G401 (cell line): ENCODE measurements at regions of chr3 and their contacts with region 1.

Region 1: GRCh38 chr3:14274999-14275961 is 96.7 kb downstream of the LSM3 start:
- DNase-seq: no peak

Region 2: GRCh38 chr3:14177580-14178246 is 97.6 kb before region 1 on chr3:
- in situ Hi-C with region 1: no loop called
- DNase-seq: peak; percentile 49

Region 3: DNA sequence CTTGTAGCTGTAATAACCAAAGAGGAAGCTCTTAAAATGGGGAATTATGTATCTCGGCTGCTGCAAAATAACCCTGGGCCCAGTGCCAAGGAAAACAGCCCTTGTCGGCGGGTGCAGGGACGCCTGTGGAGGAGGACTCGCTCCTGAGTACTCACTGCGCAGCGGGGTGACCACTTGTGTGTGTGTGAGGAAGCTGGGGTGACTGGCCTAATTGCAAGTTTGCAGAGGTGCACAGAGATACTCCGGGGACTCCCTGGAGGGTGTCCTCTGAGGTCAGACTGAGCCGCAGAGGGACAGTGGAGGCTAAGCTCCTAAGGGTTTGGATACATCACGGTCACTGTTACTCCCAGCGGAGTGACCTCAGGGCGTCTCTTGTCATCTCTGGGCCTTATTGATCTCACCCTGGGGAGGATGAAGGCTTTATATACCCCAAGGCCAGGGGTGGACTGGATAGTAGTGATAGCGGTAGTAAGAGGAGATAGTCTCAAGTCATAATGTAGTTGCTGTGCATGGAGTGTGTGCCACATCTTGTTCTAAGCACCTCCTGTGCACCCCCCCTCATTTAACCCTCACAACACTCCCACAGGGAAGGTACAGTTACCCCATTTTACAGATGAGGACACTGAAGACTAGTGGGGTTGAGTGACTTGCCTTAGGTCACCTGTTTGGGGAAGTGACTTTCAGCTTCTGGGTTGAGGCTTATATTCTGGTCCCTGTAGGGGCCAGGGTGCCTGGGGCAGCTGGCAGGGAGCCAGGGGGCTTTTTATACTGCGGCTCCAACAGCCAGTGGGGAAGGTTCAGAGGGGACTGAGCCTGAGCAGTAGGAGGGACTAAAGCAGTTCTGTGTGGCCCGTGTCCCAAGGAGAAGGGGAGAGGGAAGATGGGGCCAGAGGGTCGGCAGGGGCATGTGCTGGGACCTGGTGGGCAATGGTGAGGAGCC is 164.6 kb after region 1 on chr3:
- in situ Hi-C with region 1: no loop called
- DNase-seq: no peak

Region 4: DNA sequence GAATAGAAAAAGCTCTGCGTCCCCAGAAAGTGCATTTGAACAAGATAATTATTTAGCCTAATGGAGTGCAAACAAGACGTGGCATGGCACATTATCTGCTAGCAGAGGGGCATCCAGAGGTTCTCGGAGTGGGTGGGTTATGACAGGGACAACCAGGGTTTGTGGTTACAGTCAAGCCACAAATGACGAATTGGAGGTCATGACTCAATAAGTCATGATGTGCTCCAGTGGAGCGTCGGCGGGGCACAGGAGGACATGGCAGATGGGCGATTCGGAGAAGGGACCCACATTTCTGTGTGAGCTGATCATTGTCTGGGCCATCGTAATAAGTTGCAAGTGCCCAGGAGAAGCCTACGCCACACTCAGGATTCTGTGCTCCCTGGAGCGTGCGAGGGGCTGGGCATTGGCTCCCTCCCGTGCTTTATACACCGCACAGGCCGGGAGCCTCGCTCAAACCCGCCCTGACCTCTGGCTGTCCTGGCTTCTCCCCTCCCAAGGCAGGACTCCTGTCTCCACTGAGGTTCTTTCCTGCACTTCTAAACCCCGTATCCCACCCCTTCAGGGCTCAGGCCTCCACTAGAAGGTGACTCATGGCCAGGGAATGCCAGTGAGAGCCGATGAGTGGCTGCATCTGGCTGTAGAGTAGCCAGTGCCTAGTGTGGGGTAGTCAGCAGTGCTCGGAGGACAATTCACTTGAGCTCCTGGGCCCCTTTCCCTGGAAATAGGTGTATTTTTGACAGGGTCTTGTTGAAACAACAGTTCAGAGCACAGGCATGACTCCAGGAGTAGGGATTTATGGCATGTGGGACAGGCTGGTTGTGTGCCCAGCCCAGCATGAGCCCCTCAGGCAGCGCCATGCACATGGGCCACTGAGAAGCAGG is 197.4 kb after region 1 on chr3:
- in situ Hi-C with region 1: loop called (anchors 10 kb)
- DNase-seq: no peak

Region 5: GRCh38 chr3:15040844-15041243 is 765.6 kb after region 1 on chr3:
- in situ Hi-C with region 1: no loop called
- DNase-seq: no peak